GM12878 (cell line): ENCODE measurements at regions of chr1 and their contacts with region 1.

Region 1: GRCh38 chr1:201408176-201408833 is 9.2 kb upstream of the LAD1 start:
- DNase-seq: no peak
- ATAC-seq: peak; percentile 51
- H3K4me3 ChIP-seq: no peak overlapping the region
- H3K27ac ChIP-seq: no peak overlapping the region
- H3K4me1 ChIP-seq: peaks cover 35% of the 10 kb centered on the region
- H3K27me3 ChIP-seq: no peaks in the 10 kb centered on the region; a peak in 1 of 4 replicates
- CTCF ChIP-seq: peak; percentile 96 to 99 (median 98); a peak in 5 of 6 replicates
- EP300 ChIP-seq: no peak
- POLR2A ChIP-seq: no peak
- RAD21 ChIP-seq: peak; percentile 70

Region 2: GRCh38 chr1:201254625-201255506 is 153.4 kb before region 1 on chr1:
- CTCF ChIA-PET with region 1: interaction called, 9 read pairs
- POLR2A ChIA-PET with region 1: no interaction called
- RAD21 ChIA-PET with region 1: no interaction called
- SMC1A ChIA-PET with region 1: no interaction called
- in situ Hi-C with region 1: no loop called
- intact Hi-C with region 1: loop called (anchors 1 kb)
- DNase-seq: no peak
- ATAC-seq: peak; percentile 95
- H3K4me3 ChIP-seq: no peak overlapping the region
- H3K27ac ChIP-seq: no peak overlapping the region
- H3K4me1 ChIP-seq: no peaks in the 10 kb centered on the region
- H3K27me3 ChIP-seq: no peaks in the 10 kb centered on the region
- CTCF ChIP-seq: peak; percentile 94 to 99 (median 96)
- EP300 ChIP-seq: no peak
- POLR2A ChIP-seq: no peak
- RAD21 ChIP-seq: peak; percentile 89

Region 3: GRCh38 chr1:201385299-201385891 is 22.9 kb before region 1 on chr1:
- CTCF ChIA-PET with region 1: interaction called, 623 read pairs
- POLR2A ChIA-PET with region 1: interaction called, 228 read pairs
- RAD21 ChIA-PET with region 1: interaction called, 340 read pairs
- SMC1A ChIA-PET with region 1: interaction called, 374 read pairs
- in situ Hi-C with region 1: no loop called
- intact Hi-C with region 1: loop called (anchors 1 kb)
- DNase-seq: no peak
- ATAC-seq: peak; percentile 99
- H3K4me3 ChIP-seq: no peak overlapping the region
- H3K27ac ChIP-seq: no peak overlapping the region
- H3K4me1 ChIP-seq: no peaks in the 10 kb centered on the region
- H3K27me3 ChIP-seq: no peaks in the 10 kb centered on the region; a peak in 1 of 4 replicates
- CTCF ChIP-seq: peak; percentile 93 to 97 (median 96); a peak in 5 of 6 replicates
- EP300 ChIP-seq: no peak
- POLR2A ChIP-seq: no peak
- RAD21 ChIP-seq: peak; percentile 78

Region 4: DNA sequence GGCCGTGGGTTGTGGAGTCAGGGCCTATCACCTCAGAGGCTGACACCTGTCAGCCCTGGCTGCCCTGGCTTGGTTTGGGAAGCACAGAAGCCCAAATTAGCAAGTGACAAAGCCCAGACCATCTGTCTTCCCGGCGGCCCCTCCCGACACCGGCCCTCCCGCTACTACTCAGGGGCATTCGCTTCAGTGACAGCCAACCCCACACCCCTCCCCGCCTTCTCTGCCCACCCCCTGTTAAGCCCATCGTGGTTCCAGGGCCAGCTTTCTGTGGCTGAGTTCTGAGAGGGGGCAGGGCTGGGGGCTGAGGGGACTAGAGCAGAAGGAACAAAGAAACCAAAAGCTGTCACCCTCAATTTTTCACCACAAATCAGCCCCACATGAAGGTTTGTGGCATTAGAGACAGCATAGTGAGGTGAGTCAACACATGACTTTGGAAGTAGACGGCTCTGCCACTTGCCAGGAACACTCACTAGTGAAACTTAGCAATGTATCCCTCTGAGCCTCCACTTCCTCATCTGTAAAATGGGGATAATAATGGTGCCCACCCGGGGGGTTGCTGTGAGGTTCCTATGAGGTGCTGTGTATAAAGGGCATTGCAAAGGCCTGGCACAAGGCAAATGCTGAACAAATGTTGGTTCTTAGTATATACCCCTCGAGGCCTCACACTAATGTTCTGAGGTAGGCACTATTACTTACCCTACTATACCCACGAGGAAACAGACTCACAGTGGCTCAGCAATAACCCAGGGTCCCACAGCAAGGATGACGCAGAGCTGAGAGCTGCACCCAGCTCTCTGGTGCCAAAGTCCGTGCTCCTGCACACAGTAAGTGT is 18.4 kb after region 1 on chr1:
- CTCF ChIA-PET with region 1: interaction called, 56 read pairs
- POLR2A ChIA-PET with region 1: interaction called, 3 read pairs
- RAD21 ChIA-PET with region 1: interaction called, 17 read pairs
- SMC1A ChIA-PET with region 1: interaction called, 14 read pairs
- in situ Hi-C with region 1: no loop called
- intact Hi-C with region 1: no loop called
- DNase-seq: no peak
- ATAC-seq: peak; percentile 69
- H3K4me3 ChIP-seq: no peak overlapping the region
- H3K27ac ChIP-seq: no peak overlapping the region
- H3K4me1 ChIP-seq: peaks cover 3% of the 10 kb centered on the region
- H3K27me3 ChIP-seq: no peaks in the 10 kb centered on the region
- CTCF ChIP-seq: no peak
- EP300 ChIP-seq: peak; percentile 13 to 30; a peak in 1 of 4 replicates
- POLR2A ChIP-seq: no peak
- RAD21 ChIP-seq: no peak

Region 5: DNA sequence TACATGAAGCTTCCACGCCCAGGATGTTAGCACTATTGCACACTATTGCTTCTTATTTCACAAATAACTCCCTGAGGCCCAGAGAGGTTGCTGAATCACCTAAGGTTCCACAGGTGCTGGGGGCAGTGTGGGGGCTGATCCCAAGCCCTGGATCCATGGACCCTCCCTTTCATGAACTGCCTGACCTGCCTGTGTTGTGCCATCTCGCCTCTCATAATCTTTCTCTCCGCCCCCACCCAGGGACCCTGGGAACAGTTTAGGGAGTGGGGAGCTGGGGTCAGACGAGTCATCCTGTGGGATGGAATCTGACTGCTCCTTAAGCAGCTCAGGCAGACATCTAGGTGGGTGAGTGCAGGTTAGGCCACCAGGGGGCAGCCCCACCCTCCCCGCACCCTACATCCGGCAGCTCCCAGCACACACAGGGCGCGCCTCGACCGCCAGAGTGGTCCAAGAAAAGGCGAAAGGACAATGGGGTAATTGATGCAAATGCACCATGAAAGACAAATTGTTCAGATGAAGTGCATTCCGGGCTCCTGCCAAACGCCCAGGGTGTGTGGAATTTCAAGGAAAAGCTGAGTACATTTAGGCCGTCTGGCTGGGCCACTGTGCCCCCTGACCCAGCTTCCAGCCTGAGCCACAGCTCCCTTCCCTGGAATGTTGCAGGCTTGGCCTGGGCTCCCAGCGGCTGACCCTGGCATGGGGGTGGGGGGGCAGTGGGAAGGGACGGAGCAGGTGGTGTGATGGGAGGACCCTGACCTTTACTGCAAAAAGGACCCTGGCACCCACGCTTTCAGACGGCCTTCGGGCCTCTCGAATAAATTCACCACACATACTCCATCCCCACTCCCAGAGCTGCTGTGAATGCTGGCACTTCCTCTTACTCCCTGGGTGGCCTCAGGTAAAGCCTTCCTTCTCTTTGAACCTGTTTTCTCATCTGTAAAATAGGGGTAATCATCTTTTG is 39.9 kb after region 1 on chr1:
- CTCF ChIA-PET with region 1: interaction called, 16 read pairs
- POLR2A ChIA-PET with region 1: interaction called, 4 read pairs
- RAD21 ChIA-PET with region 1: interaction called, 5 read pairs
- SMC1A ChIA-PET with region 1: interaction called, 5 read pairs
- in situ Hi-C with region 1: no loop called
- intact Hi-C with region 1: no loop called
- DNase-seq: no peak
- ATAC-seq: peak; percentile 98
- H3K4me3 ChIP-seq: no peak overlapping the region
- H3K27ac ChIP-seq: no peak overlapping the region
- H3K4me1 ChIP-seq: peaks cover 16% of the 10 kb centered on the region
- H3K27me3 ChIP-seq: no peaks in the 10 kb centered on the region
- CTCF ChIP-seq: peak; percentile 87 to 95 (median 91)
- EP300 ChIP-seq: no peak
- POLR2A ChIP-seq: no peak
- RAD21 ChIP-seq: peak; percentile 77